SK-N-SH (cell line): ENCODE measurements at regions of chr5 and their contacts with region 1.

Region 1: DNA sequence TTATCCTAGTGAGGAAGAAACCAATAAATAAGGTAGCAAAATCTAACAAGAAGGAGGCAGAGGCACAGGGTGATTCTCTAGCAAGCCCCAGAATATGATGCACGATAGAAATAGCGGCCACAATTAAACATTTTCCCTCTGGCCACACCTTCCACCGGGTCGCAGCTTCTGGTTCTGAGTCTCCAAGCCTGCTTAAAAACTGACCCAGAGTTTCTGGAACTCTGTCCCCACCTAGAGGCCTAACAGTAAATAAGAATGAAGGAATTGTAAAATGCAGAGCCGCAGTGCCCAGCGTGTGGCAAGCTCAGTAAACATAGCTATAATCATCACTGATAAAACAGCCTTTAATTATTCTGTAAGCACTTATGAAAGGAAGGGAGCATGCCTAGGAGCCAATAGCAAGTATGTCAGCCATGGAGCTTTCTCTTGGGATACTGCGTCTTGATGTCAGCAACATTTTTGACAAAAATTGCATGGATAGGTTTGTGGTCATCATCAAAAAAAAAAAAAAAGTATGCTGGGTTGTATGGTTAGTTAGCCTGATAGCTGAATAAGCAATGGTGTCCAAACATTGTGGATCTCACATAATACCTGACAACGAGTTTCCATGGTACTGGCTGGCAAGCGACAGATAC is 465.5 kb downstream of the DNAH5 start:
- DNase-seq: peak; percentile 41
- H3K4me3 ChIP-seq: no peak overlapping the region
- H3K27ac ChIP-seq: no peak overlapping the region
- H3K4me1 ChIP-seq: no peaks in the 10 kb centered on the region
- H3K27me3 ChIP-seq: peaks cover 5% of the 10 kb centered on the region; the same call in 1 of the 2 replicates
- CTCF ChIP-seq: peak; percentile 69
- EP300 ChIP-seq: no peak
- RAD21 ChIP-seq: peak; percentile 75

Region 2: DNA sequence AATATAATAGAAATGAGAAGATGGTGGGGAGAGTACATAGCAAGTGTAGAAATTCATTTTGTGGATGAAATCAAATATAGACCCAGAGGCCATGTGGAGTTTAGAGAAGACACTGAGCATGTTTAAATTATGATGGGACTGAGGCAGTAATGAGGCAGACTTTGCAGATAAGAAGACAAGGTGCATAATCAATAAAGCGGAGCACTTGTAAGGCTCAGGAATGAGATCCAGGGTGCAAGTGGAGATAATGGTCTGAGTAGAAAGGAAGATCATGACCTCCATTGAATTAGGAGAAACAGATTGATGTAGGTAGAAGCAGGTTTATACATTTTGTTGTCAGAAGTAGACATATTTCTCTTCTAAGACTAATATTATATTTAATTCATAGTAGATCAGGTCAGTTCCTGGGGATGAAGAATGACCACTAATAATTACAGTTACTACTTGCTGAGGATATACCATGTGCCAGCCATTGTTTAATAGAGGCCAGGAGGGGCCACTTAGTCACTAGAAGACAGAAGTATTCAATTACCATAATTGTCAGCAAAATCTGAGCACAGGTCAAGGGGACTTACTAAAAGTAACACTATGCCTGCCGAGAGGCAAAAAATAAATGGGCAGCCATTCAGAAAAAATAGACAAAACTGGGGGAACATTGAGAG is 14.3 kb before region 1 on chr5:
- CTCF ChIA-PET with region 1: interaction called, 10 read pairs
- POLR2A ChIA-PET with region 1: no interaction called
- DNase-seq: no peak
- H3K4me3 ChIP-seq: no peak overlapping the region
- H3K27ac ChIP-seq: no peak overlapping the region
- H3K4me1 ChIP-seq: no peaks in the 10 kb centered on the region
- H3K27me3 ChIP-seq: no peaks in the 10 kb centered on the region
- CTCF ChIP-seq: no peak
- EP300 ChIP-seq: no peak
- RAD21 ChIP-seq: no peak